ENCODE measurements at regions of chr19 and their contacts with region 1.

Region 1: DNA sequence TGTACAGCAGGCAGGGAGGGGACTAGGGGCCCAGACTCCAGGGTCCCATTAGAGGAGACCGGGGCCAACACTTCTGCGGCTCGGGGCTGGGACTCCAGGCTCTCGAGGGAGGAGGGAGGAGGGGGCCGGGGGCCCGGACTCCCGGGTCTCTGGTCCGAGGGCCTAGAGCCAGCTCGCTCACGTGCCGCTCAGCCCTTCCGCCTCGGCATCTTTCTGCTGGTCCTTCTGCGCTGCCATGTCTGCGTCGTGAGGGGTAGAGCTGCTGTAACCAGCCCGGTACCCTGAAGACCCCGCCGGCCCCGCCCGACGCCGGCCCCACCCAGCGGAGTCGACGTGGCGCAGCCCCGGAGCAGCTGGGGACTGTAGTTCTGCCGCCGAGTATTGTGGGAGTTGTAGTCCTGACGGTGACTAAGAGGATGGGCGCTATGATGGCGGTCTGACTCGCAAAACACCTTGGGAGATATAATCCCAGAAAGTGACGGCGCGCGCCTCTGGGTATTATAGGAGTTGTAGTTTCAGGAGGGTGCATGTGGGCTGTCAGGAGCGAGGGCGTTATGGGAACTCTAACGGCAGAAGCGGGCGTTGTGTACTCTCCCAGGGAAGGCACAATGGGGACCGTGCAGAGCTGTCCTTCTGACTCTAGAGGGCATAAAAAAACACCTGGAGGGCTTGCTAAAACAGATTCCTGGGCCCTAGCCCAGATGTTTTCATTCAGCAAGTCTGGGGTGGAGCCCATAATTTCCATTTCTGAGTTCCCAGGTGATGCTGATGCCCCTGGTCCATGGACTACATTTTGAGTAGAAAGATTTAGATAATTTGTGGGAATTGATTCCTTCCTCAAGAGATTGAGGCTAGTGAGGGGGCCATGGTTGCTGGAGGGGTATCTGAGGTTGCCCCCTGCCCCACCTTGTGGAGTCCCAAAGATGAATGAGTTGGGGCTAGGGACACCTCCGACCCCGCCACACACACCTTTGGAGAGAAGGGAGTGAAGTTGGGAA is at the start of gene RABAC1:
- DNase-seq: peak; percentile 85
- ATAC-seq: peak; percentile 76
- H3K4me3 ChIP-seq: peak within 1 kb of the TSS; percentile 88
- H3K27ac ChIP-seq: peak within 1 kb of the TSS; percentile 47
- H3K4me1 ChIP-seq: peaks cover 15% of the 10 kb centered on the region
- H3K27me3 ChIP-seq: no peaks in the 10 kb centered on the region
- CTCF ChIP-seq: peak; percentile 44; the same call in 1 of the 2 replicates
- total RNA-seq, gene RABAC1: 148 and 158 TPM in 2 replicates

Region 2: GRCh38 chr19:41795031-41795461 is 164.3 kb before region 1 on chr19:
- CTCF ChIA-PET with region 1: no interaction called
- POLR2A ChIA-PET with region 1: no interaction called
- intact Hi-C with region 1: loop called (anchors 10 kb)
- DNase-seq: peak; percentile 70
- ATAC-seq: no peak
- H3K4me3 ChIP-seq: no peak overlapping the region
- H3K27ac ChIP-seq: peak overlapping the region; percentile 100
- H3K4me1 ChIP-seq: peaks cover 60% of the 10 kb centered on the region
- H3K27me3 ChIP-seq: no peaks in the 10 kb centered on the region
- CTCF ChIP-seq: peak; percentile 74

Region 3: DNA sequence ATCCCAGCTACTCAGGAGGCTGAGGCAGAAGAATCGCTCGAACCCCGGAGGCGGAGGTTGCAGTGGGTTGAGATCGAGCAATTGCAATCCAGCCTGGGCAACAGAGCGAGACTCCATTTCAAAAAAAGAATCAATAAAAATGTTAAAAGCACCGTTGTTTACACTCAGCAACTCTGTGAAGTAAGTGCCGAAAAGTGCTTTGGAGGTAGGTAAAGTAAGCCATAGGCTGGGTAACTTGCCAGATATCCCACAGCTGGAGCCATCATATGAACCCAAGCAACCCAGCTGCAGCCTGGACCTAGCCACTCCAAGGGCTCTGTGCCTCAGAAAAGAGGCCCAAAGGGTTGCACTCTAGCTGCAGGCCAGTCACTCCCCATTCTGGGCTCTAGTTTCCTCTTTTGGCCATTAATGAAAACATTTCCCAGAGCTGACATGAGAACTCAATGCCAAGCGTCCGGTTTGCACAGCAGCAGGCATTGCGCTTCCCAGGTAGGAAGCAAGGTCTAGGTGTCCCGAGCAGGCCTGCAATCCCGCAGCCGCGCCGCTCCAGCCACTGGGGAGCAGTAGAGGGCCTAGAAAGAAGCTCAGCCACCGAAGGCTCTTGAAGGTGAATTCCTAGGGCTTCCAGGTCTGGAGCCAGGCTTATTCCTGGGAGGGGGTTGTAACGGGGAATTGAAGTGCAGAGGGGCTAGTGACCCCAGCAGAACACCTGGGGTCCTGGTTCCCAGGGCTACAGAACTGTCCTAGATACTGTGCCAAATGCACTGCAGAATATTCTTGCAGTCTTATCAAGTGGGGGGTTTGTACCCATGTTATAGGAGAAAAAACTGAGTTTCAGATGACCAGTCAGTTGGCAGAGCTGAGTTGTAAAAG is 86.3 kb before region 1 on chr19:
- CTCF ChIA-PET with region 1: interaction called, 3 read pairs
- POLR2A ChIA-PET with region 1: no interaction called
- intact Hi-C with region 1: loop called (anchors 5 kb)
- DNase-seq: peak; percentile 75
- ATAC-seq: peak; percentile 84
- H3K4me3 ChIP-seq: no peak overlapping the region
- H3K27ac ChIP-seq: no peak overlapping the region
- H3K4me1 ChIP-seq: peaks cover 8% of the 10 kb centered on the region; the same call in 1 of the 2 replicates
- H3K27me3 ChIP-seq: no peaks in the 10 kb centered on the region
- CTCF ChIP-seq: peak; percentile 78

Region 4: DNA sequence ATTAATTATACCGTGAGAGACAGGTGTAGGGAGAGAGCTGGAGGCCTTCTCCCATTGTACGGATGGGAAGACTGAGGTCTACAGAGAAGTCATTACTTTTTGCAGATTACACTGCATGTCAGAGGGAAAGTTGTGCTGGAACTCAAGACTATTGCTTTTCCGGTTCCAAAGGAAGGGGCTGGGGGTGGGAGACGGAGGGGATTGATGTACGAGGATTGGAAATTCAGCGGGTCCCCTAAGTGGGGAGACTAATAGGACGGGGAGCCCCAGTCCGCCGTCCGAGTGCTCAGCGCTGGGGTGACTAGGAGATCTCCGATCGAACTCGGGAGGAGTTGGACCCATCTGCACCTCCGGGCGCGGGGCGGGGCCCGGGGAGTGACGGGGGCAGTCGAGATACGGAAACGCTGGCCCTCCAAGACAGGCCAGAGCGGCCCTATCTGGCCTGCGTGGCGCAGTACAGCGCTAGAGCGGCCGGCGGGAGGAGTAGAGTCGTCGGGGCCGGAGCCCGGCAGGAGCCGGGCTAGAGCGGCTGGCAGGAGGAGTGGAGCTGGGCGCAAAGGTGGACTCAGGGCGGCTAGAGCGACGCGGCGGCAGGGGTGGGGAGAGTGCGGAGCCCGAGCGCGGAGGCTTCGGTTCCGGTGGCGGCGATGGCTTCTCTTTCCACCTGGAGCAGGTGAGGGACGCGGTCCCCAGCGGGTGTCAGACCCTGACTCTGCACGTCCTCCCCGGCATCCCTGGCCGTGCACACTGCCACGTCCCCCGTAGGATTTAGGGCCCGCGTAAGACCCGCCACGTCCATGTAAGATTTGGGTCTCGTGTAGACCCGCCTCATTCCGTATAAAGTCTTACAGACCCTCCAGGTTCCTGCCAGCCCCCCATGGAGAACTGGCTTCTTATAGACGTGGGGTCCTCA is 75.3 kb before region 1 on chr19:
- CTCF ChIA-PET with region 1: no interaction called
- POLR2A ChIA-PET with region 1: no interaction called
- intact Hi-C with region 1: loop called (anchors 5 kb)
- DNase-seq: peak; percentile 95
- ATAC-seq: peak; percentile 74
- H3K4me3 ChIP-seq: peak overlapping the region; percentile 98
- H3K27ac ChIP-seq: peak overlapping the region; percentile 25
- H3K4me1 ChIP-seq: peaks cover 32% of the 10 kb centered on the region
- H3K27me3 ChIP-seq: no peaks in the 10 kb centered on the region
- CTCF ChIP-seq: no peak

Region 5: DNA sequence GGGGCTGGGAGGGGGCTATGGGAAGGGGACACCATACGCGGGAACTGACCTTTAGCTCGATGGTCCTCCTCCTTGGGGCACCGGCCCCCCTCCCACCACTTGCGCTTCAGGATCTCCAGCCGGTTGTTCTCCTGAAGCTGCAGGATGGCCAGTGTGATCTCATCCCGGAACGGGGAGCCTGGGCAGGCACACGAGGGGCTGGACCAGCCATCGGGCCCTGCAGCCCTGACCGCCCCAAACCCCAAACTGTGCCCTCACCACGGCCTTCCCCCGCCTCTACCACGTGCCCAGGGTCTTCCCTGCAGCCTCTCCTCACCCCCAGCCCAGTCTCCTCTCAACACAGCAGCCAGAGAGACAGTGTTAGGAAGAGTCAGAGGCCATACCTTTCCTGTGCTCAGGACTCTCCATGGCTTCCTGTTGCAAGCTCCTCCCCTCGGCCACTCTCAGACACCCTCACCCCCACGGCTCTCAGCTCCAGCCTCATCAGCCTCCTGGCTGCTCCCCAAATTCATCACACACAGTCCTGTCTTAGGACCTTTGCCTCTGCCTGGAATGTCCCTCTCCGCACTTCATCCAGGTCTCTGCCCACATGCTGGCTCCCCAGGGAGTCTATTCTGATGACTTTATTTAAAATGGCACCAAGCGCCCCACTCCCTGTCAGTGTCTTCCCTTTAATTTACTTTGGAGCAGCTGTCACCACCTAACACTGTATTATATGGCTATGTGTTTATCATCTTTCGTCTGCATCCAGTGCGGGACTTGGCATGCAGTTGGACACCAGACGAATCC is 44.3 kb after region 1 on chr19:
- CTCF ChIA-PET with region 1: no interaction called
- POLR2A ChIA-PET with region 1: no interaction called
- intact Hi-C with region 1: no loop called
- DNase-seq: no peak
- ATAC-seq: no peak
- H3K4me3 ChIP-seq: no peak overlapping the region
- H3K27ac ChIP-seq: no peak overlapping the region
- H3K4me1 ChIP-seq: no peaks in the 10 kb centered on the region
- H3K27me3 ChIP-seq: peaks cover 37% of the 10 kb centered on the region
- CTCF ChIP-seq: no peak

Region 6: GRCh38 chr19:42032431-42032830 is 73.1 kb after region 1 on chr19:
- CTCF ChIA-PET with region 1: interaction called, 5 read pairs
- POLR2A ChIA-PET with region 1: no interaction called
- intact Hi-C with region 1: loop called (anchors 2 kb)
- DNase-seq: peak; percentile 80
- ATAC-seq: peak; percentile 56
- H3K4me3 ChIP-seq: no peak overlapping the region
- H3K27ac ChIP-seq: peak overlapping the region; percentile 28; the same call in 1 of the 2 replicates
- H3K4me1 ChIP-seq: peaks cover 11% of the 10 kb centered on the region; the same call in 1 of the 2 replicates
- H3K27me3 ChIP-seq: no peaks in the 10 kb centered on the region
- CTCF ChIP-seq: no peak

Measured in PC-3 (cell line).